ENCODE measurements at regions of chr12 and their contacts with region 1.

Region 1: DNA sequence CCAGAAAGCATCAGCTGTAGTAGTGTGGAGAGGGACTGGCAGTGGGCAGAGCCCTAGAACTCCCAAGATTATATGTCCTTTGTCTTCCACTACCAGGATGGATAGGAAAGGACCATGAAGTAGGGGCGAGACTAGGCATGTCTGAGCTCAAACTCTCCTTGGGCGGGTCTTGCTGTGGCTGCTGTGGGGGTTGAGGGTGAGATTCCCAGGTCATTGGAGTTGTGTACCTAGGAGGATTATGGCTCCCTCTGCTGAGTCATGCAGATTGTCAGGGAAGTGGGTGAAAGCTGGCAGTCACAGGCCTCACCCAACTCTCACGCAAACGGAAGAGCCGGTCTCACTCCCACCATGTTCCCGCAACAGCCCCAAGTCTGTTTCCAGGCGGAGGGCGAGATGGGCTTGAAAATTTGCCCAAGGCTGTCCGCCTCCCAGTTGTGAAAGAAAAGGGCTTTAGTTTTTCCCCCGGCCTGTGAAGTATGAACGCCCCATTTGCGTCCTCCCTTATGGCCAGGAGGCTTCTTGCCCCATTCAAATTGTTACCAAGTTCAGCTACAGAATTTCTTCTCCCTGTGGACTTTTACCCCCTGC is 159.4 kb downstream of the SLC2A13 start:
- DNase-seq: no peak
- ATAC-seq: no peak

Region 2: GRCh38 chr12:39930101-39930500 is 16.4 kb before region 1 on chr12:
- intact Hi-C with region 1: loop called (anchors 2 kb)
- DNase-seq: no peak
- ATAC-seq: no peak

Measured in left ventricle myocardium superior (tissue), 1 donor.